Endothelial cell of umbilical vein (primary cell): ENCODE measurements at regions of chr2 and their contacts with region 1.

Region 1: GRCh38 chr2:109128048-109128465 is 948 bp upstream of the SH3RF3 start:
- DNase-seq: peak; percentile 89
- H3K4me3 ChIP-seq: peak overlapping the region; percentile 62 to 73 (median 69)
- H3K27ac ChIP-seq: peak overlapping the region; percentile 75
- H3K4me1 ChIP-seq: peaks cover 12% of the 10 kb centered on the region
- H3K27me3 ChIP-seq: no peaks in the 10 kb centered on the region
- CTCF ChIP-seq: peak; percentile 89 to 96
- POLR2A ChIP-seq: no peak

Region 2: DNA sequence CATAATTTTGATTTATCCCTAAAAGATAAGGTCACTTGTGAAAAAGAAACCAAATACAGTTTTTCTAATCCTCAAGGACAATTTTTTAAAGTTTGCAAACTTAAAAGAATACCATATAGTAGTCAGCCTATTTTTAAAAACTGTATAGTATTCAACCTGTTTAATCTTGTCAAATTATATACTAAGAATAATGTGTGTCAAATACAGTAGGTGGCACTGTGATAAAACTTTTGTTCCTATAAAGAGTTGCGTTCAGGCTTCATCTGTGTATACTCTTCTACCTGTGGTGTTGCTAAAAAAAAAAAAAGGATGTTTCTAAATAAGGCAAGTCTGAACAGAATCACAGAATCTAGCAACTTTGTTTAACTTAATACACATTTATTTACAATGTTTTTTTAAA is 272.9 kb before region 1 on chr2:
- CTCF ChIA-PET with region 1: no interaction called
- POLR2A ChIA-PET with region 1: no interaction called
- dilution Hi-C with region 1: no loop called
- intact Hi-C with region 1: no loop called
- DNase-seq: peak; percentile 24
- H3K4me3 ChIP-seq: no peak overlapping the region
- H3K27ac ChIP-seq: no peak overlapping the region
- H3K4me1 ChIP-seq: no peaks in the 10 kb centered on the region
- H3K27me3 ChIP-seq: no peaks in the 10 kb centered on the region
- CTCF ChIP-seq: no peak
- POLR2A ChIP-seq: no peak

Region 3: GRCh38 chr2:109138449-109138848 is 10.4 kb after region 1 on chr2:
- CTCF ChIA-PET with region 1: no interaction called
- POLR2A ChIA-PET with region 1: no interaction called
- dilution Hi-C with region 1: no loop called
- intact Hi-C with region 1: no loop called
- DNase-seq: peak; percentile 59
- H3K4me3 ChIP-seq: no peak overlapping the region
- H3K27ac ChIP-seq: no peak overlapping the region
- H3K4me1 ChIP-seq: peaks cover 33% of the 10 kb centered on the region
- H3K27me3 ChIP-seq: no peaks in the 10 kb centered on the region
- CTCF ChIP-seq: no peak
- POLR2A ChIP-seq: no peak

Region 4: DNA sequence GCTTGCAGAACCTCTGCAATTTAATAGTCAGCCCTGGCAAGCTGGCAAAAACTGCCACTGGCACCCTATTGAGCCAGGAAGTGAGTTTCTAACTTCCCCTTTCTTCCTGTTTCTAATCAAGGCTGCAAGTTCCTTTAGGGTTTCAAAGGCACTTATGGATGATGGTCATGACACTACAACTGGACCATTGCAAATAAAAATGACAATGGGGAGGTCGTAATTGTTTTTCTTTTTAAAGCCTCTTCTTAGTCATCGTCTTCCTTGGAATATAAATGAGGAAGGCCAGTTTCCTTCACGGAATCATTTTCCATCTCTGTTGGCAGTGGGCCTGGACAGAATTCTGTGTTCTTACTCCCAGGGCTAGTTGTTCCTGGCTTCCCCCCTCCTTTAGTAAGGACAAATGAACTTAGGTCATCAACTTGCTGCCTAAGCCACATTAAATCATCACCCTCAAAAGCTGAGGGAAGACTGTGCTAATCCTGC is 36.7 kb after region 1 on chr2:
- CTCF ChIA-PET with region 1: interaction called, 15 read pairs
- POLR2A ChIA-PET with region 1: no interaction called
- dilution Hi-C with region 1: no loop called
- intact Hi-C with region 1: no loop called
- DNase-seq: peak; percentile 95
- H3K4me3 ChIP-seq: no peak overlapping the region
- H3K27ac ChIP-seq: peak overlapping the region; percentile 37
- H3K4me1 ChIP-seq: peaks cover 50% of the 10 kb centered on the region
- H3K27me3 ChIP-seq: no peaks in the 10 kb centered on the region
- CTCF ChIP-seq: no peak
- POLR2A ChIP-seq: no peak

Region 5: GRCh38 chr2:109213646-109214417 is 85.8 kb after region 1 on chr2:
- CTCF ChIA-PET with region 1: interaction called, 5 read pairs
- POLR2A ChIA-PET with region 1: no interaction called
- dilution Hi-C with region 1: no loop called
- intact Hi-C with region 1: loop called (anchors 2 kb)
- DNase-seq: peak; percentile 60
- H3K4me3 ChIP-seq: no peak overlapping the region
- H3K27ac ChIP-seq: peak overlapping the region; percentile 17
- H3K4me1 ChIP-seq: peaks cover 30% of the 10 kb centered on the region
- H3K27me3 ChIP-seq: no peaks in the 10 kb centered on the region
- CTCF ChIP-seq: no peak
- POLR2A ChIP-seq: peak; percentile 11

Region 6: DNA sequence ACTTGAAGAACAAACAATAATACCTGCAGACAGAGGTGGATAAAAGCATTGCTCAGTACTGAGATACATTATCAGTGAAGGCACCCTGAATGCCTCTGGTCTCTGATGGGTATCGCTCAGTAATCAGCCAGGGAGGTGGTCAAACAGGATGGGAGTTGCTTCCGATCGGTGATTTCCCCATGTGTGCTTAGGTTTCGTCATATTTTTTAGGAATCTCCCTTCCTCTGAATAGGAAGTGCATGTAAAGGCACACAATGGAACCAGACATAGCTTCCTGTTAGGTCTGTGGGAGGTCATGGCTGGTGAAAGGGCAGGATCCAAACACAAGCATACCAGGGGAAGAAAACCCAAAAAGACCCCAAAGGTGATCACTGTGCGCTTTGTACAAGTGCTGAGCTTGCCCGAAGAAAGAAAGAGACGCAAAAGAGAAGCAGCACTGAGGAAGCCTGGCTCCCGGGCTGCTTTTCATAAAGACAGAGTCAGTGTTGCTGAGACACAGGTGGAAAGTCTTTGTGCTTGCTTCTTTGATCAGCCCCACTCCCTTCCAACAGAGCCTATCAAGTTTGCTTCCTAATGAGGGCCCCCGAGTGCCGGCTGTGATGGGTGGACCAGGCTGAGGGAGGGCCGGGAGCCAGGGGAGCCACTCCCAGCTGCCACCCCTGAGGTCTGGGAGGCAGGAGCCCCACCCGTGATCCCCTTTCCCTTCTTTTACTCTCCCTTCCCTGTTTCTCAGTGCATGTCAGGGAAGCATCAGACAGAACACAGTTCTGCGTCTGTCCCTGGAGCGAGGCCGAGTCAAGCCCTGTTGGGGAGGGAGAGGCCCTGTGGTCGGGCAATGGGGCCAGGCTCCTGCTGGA is 139.2 kb after region 1 on chr2:
- CTCF ChIA-PET with region 1: no interaction called
- POLR2A ChIA-PET with region 1: no interaction called
- dilution Hi-C with region 1: no loop called
- intact Hi-C with region 1: loop called (anchors 1 kb)
- DNase-seq: peak; percentile 87
- H3K4me3 ChIP-seq: no peak overlapping the region
- H3K27ac ChIP-seq: peak overlapping the region; percentile 95
- H3K4me1 ChIP-seq: peaks cover 39% of the 10 kb centered on the region
- H3K27me3 ChIP-seq: no peaks in the 10 kb centered on the region
- CTCF ChIP-seq: no peak
- POLR2A ChIP-seq: peak; percentile 45

Region 7: DNA sequence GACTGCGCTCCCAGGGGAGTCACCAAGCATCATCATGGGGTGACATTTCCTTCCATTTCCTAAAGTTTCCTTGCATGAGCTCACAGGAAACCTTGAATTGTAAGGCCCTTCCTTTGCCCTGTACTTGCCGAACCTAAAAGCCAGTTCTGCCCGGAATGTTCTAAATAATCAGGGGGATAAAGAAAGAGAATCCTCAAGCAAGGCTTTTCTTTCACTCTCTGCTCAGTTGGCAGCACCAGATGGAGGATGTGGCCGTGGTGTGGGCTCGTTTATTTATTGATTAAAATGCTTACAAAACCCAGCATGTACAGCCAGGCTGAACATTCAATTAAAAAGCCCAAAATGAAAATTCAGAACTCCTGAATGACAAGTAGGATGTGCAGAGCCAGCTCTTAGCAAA is 171.5 kb after region 1 on chr2:
- CTCF ChIA-PET with region 1: no interaction called
- POLR2A ChIA-PET with region 1: no interaction called
- dilution Hi-C with region 1: no loop called
- intact Hi-C with region 1: no loop called
- DNase-seq: no peak
- H3K4me3 ChIP-seq: no peak overlapping the region
- H3K27ac ChIP-seq: peak overlapping the region; percentile 5
- H3K4me1 ChIP-seq: peaks cover 15% of the 10 kb centered on the region
- H3K27me3 ChIP-seq: no peaks in the 10 kb centered on the region
- CTCF ChIP-seq: no peak
- POLR2A ChIP-seq: no peak

Region 8: DNA sequence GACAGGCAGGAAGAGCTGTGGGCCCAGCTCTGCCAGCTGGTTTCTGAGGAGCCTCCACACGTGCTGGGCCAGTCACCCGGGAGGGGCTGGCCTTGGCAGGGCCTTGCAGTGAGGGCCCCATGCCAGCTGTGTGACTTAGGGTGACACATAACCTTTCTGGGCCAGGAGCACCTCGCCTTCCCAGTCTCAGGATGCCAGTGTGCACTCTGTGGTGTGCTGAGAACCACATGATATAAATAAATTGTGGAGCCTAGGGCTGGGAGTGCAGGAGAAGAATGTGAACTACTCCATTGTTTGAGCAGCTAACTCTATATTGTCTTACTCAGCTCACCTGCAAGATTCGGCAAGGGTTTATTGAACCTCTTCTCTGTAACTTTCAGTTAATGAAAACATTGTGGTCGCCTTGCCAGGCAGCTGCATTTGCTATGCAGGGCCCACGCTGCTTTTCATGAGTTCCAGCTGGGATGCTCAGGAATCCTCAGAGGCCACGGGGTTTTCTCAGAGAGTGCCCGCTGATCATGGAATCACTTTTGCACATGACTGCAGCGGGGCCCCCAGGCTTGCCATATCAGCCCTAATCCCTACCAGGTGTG is 223.2 kb after region 1 on chr2:
- CTCF ChIA-PET with region 1: interaction called, 10 read pairs
- POLR2A ChIA-PET with region 1: no interaction called
- dilution Hi-C with region 1: no loop called
- intact Hi-C with region 1: loop called (anchors 1 kb)
- DNase-seq: peak; percentile 69
- H3K4me3 ChIP-seq: no peak overlapping the region
- H3K27ac ChIP-seq: no peak overlapping the region
- H3K4me1 ChIP-seq: peaks cover 38% of the 10 kb centered on the region
- H3K27me3 ChIP-seq: no peaks in the 10 kb centered on the region
- CTCF ChIP-seq: no peak
- POLR2A ChIP-seq: no peak